ENCODE measurements at regions of chr5 and their contacts with region 1.

Region 1: DNA sequence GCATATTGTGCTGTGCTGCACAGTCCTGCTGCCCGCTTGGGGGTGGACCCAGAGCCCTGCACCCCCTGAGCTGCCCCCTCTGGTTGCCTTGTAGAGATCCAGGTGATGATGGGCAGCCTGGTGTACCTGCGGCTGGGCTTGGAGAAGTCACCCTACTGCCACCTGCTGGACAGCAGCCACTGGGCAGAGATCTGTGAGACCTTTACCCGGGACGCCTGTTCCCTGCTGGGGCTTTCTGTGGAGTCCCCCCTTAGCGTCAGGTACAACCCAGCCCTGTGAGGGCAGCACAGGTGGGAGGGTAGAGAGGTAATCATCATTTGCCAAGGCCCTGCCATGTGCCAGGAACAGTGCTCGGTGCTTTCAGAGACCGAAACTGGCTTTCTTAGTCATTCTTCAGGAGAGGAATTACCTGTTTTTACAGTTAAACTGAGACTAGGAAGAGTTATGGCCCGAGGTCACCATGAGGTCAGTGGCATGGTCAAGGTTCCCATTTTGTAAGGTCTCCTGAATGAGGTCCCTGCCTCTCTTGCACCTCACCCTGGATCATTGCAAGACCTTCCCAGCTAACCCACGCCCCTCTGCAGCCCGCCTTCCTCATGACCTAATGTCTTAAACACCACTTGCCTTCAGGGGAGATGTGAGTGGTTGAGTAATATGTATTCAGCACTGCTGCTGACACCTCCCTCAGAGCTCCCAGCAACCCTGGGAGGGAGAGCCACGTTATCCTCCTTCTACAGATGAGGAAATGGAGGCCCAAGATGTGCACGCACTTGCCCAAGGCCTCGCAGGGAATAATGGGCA is 7.5 kb downstream of the NHP2 start:
- DNase-seq: peak; percentile 65
- ATAC-seq: peak; percentile 89
- H3K4me3 Mint-ChIP-seq: no peak overlapping the region
- H3K27ac Mint-ChIP-seq: no peak overlapping the region
- H3K4me1 Mint-ChIP-seq: peaks cover 4% of the 10 kb centered on the region
- H3K27me3 Mint-ChIP-seq: no peaks in the 10 kb centered on the region
- CTCF ChIP-seq: peak; percentile 26

Region 2: GRCh38 chr5:178113199-178113787 is 32.9 kb before region 1 on chr5 and contains the start of gene N4BP3:
- CTCF ChIA-PET with region 1: no interaction called
- POLR2A ChIA-PET with region 1: interaction called, 5 read pairs
- intact Hi-C with region 1: loop called (anchors 1 kb)
- DNase-seq: peak; percentile 92
- ATAC-seq: peak; percentile 70
- H3K4me3 Mint-ChIP-seq: peak within 1 kb of the TSS; percentile 98
- H3K27ac Mint-ChIP-seq: peak within 1 kb of the TSS; percentile 94
- H3K4me1 Mint-ChIP-seq: peaks cover 65% of the 10 kb centered on the region
- H3K27me3 Mint-ChIP-seq: no peaks in the 10 kb centered on the region
- CTCF ChIP-seq: no peak
- total RNA-seq, gene N4BP3: 17.4 and 18.1 TPM in 2 replicates

Region 3: GRCh38 chr5:178120868-178121357 is 25.3 kb before region 1 on chr5:
- CTCF ChIA-PET with region 1: interaction called, 11 read pairs
- POLR2A ChIA-PET with region 1: interaction called, 5 read pairs
- intact Hi-C with region 1: loop called (anchors 1 kb)
- DNase-seq: peak; percentile 56
- ATAC-seq: peak; percentile 67
- H3K4me3 Mint-ChIP-seq: peak overlapping the region; percentile 55
- H3K27ac Mint-ChIP-seq: peak overlapping the region; percentile 65
- H3K4me1 Mint-ChIP-seq: peaks cover 66% of the 10 kb centered on the region
- H3K27me3 Mint-ChIP-seq: no peaks in the 10 kb centered on the region
- CTCF ChIP-seq: peak; percentile 25

Region 4: GRCh38 chr5:178130604-178131485 is 15.4 kb before region 1 on chr5 and contains the start of gene RMND5B:
- CTCF ChIA-PET with region 1: no interaction called
- POLR2A ChIA-PET with region 1: interaction called, 10 read pairs
- intact Hi-C with region 1: no loop called
- DNase-seq: peak; percentile 86
- ATAC-seq: peak; percentile 89
- H3K4me3 Mint-ChIP-seq: peak within 1 kb of the TSS; percentile 85
- H3K27ac Mint-ChIP-seq: peak within 1 kb of the TSS; percentile 74
- H3K4me1 Mint-ChIP-seq: peaks cover 21% of the 10 kb centered on the region
- H3K27me3 Mint-ChIP-seq: no peaks in the 10 kb centered on the region
- CTCF ChIP-seq: no peak
- total RNA-seq, gene RMND5B: 42.4 and 57.2 TPM in 2 replicates

Region 5: DNA sequence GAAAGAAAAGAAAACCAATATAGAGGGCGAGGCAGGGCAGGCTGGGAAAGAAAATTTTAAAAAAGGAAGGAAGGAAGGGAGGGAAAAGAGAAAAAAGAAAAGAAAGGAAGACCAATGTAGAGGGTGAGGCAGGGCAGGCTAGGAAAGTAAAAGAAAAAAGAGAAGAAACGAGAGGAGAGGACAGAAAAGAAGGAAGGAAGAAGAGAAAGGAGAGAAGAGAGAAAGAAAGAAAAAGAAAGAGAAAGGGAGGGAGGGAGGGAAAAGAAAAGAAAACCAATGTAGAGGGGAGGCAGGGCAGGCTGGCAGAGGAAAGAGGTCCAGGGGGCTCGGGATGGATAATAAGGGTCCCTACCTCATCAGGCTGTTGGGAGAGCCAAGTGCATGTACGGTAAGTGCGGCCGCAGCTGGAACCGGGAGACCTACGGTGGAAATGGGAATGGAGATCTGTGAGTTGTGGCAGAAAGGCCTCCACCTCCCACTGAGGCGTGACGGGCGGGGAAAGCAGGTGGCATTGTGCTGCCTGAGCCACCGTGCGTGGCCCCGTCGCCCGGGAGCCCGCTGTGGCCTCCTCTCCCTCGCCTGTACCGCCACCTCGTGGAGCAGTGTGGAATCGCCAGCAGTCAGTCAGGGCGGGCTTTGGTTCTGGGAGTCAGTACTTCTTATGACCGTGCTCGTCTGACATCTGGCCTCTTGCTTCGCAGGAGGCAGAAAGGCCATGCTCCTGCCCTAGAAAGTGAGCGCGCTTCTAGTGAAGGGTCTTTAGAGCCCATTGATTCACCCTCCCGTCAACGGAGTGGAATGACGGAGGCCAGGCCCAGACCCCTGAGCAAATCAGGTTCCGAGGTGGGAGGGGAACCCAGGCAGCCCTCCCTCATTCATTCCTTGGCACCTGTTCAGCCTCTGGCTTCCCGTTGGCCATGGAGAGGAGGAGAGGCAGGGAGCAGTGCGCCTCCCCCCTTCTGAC is 17.8 kb after region 1 on chr5:
- CTCF ChIA-PET with region 1: interaction called, 4 read pairs
- POLR2A ChIA-PET with region 1: no interaction called
- intact Hi-C with region 1: loop called (anchors 1 kb)
- DNase-seq: peak; percentile 92
- ATAC-seq: peak; percentile 100
- H3K4me3 Mint-ChIP-seq: peak overlapping the region; percentile 46
- H3K27ac Mint-ChIP-seq: peak overlapping the region; percentile 24
- H3K4me1 Mint-ChIP-seq: peaks cover 15% of the 10 kb centered on the region
- H3K27me3 Mint-ChIP-seq: peaks cover 8% of the 10 kb centered on the region
- CTCF ChIP-seq: peak; percentile 68